Activated naive CD4-positive, alpha-beta T cell treated with anti-CD3 and anti-CD28 coated beads for 36 hours (primary cell): ENCODE measurements at regions of chr6 and their contacts with region 1.

Region 1: GRCh38 chr6:26087284-26088115 is at the start of gene HFE:
- DNase-seq: peak; percentile 48
- H3K4me3 Mint-ChIP-seq: peak within 1 kb of the TSS; percentile 77
- H3K27ac Mint-ChIP-seq: peak within 1 kb of the TSS; percentile 59
- H3K4me1 Mint-ChIP-seq: peaks cover 32% of the 10 kb centered on the region
- H3K27me3 Mint-ChIP-seq: no peaks in the 10 kb centered on the region
- total RNA-seq, gene HFE: 0.57 to 1.4 TPM

Region 2: GRCh38 chr6:26075063-26075717 is 12.3 kb before region 1 on chr6:
- CTCF ChIA-PET with region 1: interaction called, 570 read pairs
- intact Hi-C with region 1: loop called (anchors 1 kb)
- DNase-seq: no peak
- H3K4me3 Mint-ChIP-seq: no peak overlapping the region
- H3K27ac Mint-ChIP-seq: no peak overlapping the region
- H3K4me1 Mint-ChIP-seq: peaks cover 4% of the 10 kb centered on the region
- H3K27me3 Mint-ChIP-seq: no peaks in the 10 kb centered on the region